H1 (cell line): ENCODE measurements at regions of chr1 and their contacts with region 1.

Region 1: DNA sequence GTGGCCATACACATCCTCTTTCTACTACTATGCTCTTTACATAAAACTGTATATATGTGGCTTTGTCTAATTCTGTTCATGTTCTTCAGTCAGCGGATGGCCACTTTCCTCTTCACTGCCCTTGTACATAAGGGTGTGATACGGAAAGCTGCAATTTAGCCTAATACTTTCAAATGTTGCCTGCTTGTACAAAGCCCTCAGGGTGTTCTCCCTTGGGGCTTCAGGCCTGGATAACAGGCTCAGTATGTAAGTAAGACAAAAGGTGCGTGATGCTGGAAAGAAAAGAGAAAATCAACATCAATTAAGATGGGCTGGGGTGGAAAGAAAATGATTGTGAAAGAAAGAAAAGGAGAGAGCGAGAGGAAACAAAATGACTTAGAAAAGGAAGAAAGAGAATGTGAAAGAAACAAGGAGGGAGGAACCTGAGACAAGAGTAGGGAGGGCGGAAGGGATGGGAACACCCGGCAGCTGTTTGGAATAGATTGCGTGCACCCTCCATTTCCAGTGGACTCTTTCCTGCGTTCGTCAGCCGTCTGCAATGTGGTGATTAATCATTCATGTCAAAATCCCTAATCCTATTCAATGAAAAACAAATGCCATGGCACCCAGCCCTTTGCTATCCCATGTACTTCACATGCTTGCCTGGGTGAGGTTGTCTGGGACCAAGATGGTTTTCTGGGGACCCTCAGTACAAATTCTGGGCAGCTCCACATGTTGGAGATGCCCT is 553.6 kb downstream of the NUF2 start:
- DNase-seq: no peak
- H3K4me3 ChIP-seq: no peak overlapping the region
- H3K27ac ChIP-seq: no peak overlapping the region
- H3K4me1 ChIP-seq: peaks cover 0 to 7% (median 3%) of the 10 kb centered on the region in 4 experiments; a peak in 2 of 7 replicates
- H3K27me3 ChIP-seq: peaks cover 0 to 1% (median 0%) of the 10 kb centered on the region in 4 experiments; a peak in 1 of 7 replicates
- CTCF ChIP-seq: no peak
- EP300 ChIP-seq: no peak
- POLR2A ChIP-seq: no peak
- RAD21 ChIP-seq: no peak

Region 2: DNA sequence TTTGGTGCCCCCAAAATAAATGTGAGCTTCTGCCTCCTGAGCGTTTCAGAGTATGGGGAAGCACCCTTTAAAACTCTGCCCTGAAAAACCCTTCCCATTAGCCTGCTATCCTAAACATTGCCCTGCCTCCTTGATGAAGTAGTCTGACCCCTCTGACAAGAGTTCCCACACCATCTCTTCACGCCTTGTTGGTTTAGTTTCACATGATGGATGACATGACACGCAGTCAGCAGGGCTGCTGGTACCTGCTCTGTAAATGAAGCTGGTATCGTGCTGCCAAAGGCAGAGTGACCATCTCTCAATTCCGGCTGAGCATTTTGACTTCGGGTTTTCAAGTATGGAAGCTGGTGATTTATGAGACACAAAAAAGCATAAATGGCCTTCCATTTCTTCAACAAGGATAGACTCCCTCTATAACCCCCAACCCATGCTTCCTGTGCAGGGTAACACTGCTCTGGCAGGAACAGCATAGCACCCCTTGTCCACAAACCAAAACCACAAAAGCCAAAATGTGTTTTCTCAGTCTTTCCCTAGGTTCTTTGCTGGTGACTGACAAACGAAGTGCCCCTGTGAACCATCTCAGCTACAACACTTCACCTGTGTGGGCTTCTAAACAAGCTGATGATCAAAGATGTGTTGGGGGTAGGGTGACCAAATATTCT is 109.0 kb before region 1 on chr1:
- CTCF ChIA-PET with region 1: no interaction called
- POLR2A ChIA-PET with region 1: no interaction called
- DNase-seq: no peak
- H3K4me3 ChIP-seq: no peak overlapping the region
- H3K27ac ChIP-seq: no peak overlapping the region
- H3K4me1 ChIP-seq: no peaks in the 10 kb centered on the region
- H3K27me3 ChIP-seq: no peaks in the 10 kb centered on the region
- CTCF ChIP-seq: no peak
- EP300 ChIP-seq: no peak
- POLR2A ChIP-seq: no peak
- RAD21 ChIP-seq: no peak

Region 3: DNA sequence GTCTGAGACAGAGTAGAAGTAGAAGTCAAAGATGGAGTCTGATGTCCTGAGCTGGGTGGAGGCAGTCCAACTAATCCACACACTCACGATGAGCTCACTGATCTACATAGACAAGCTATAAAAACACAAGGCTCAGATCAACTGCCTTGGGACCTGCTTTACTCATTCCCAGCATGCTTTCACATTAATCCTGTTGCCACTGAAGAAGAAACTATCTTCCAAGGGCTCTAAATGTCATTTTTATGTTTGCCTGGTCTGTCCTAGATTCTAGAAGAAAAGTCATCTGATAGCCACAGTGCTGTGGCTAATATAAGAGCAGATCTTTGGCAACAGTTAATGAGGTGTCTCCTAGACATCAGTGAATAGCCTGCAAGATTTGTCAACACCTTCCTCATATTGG is 30.9 kb before region 1 on chr1:
- CTCF ChIA-PET with region 1: interaction called, 11 read pairs
- POLR2A ChIA-PET with region 1: no interaction called
- DNase-seq: no peak
- H3K4me3 ChIP-seq: no peak overlapping the region
- H3K27ac ChIP-seq: no peak overlapping the region
- H3K4me1 ChIP-seq: no peaks in the 10 kb centered on the region
- H3K27me3 ChIP-seq: no peaks in the 10 kb centered on the region
- CTCF ChIP-seq: no peak
- EP300 ChIP-seq: no peak
- POLR2A ChIP-seq: no peak
- RAD21 ChIP-seq: no peak

Region 4: GRCh38 chr1:163885510-163885909 is 10.1 kb after region 1 on chr1:
- CTCF ChIA-PET with region 1: interaction called, 31 read pairs
- POLR2A ChIA-PET with region 1: interaction called, 3 read pairs
- DNase-seq: no peak
- H3K4me3 ChIP-seq: no peak overlapping the region
- H3K27ac ChIP-seq: no peak overlapping the region
- H3K4me1 ChIP-seq: peaks cover 0 to 5% (median 4%) of the 10 kb centered on the region in 4 experiments; a peak in 3 of 7 replicates
- H3K27me3 ChIP-seq: no peaks in the 10 kb centered on the region
- CTCF ChIP-seq: no peak
- EP300 ChIP-seq: no peak
- POLR2A ChIP-seq: no peak
- RAD21 ChIP-seq: no peak